ENCODE measurements at regions of chr15 and their contacts with region 1.

Region 1: DNA sequence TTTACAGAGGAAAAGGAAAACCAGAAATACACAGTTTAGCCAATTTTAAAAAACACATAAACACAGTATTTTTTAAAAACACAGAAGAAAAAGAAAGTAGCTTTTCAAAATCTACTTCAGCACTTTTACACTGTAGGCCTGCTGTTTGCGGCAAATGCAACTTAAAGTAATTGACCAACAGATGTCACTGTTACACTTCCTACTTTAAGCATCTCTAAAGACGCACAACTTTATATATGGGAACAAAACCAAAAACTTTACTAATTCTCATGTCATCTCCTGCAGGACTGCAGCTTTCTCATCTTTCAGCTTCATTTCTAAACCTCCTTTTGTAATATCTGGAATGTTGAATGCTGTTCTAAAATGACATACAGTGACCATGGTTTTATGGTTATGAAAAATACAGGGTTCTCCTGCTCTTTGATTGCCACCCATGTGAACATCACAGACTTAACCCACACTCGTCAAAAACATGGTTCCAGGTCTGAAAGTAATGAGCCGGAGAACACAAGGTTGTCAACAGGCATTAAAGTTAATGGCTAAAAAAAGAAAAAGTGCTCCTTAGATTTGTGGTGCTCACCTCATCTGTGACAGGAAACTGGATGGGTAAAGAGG is 107.9 kb downstream of the FMN1 start:
- DNase-seq: no peak
- H3K4me3 ChIP-seq: no peak overlapping the region
- H3K27ac ChIP-seq: no peak overlapping the region
- H3K4me1 ChIP-seq: no peaks in the 10 kb centered on the region
- H3K27me3 ChIP-seq: no peaks in the 10 kb centered on the region
- CTCF ChIP-seq: peak in 3 of 4 experiments; percentile 43 to 63 (median 51)
- POLR2A ChIP-seq: no peak

Region 2: DNA sequence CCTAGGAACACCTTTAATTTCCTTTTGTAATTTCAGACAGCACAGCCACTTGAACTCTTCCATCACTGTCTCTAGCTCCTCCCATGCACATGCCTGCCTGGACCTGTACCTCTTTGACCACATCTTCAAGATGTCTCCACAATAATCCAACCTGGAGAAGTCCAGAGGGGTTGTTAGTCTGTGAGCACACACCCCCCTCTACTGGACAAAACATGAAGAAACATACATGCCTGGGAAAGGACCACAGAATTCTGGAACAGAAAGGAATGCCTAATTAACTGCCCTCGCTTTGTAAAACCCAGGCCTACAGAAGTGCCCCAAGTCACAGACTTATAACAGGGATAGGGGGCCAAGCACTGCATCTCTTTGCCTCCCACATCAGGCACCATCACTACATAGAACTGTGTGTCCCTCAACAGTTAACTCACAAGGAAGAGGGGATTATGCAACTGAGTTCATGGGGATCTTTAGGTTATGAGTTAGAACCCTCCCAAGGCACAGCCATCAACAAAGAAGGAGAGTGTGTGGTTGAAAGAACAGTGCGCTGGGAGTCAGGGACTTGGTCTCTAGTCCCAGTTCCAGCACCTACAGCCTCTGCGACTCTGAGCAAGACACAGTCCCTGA is 46.2 kb after region 1 on chr15:
- intact Hi-C with region 1: loop called (anchors 5 kb)
- DNase-seq: peak; percentile 63
- H3K4me3 ChIP-seq: no peak overlapping the region
- H3K27ac ChIP-seq: no peak overlapping the region
- H3K4me1 ChIP-seq: no peaks in the 10 kb centered on the region
- H3K27me3 ChIP-seq: no peaks in the 10 kb centered on the region
- CTCF ChIP-seq: peak; percentile 15 to 81 (median 67)
- POLR2A ChIP-seq: no peak